HEK293 (cell line): ENCODE measurements at regions of chr16 and their contacts with region 1.

Region 1: DNA sequence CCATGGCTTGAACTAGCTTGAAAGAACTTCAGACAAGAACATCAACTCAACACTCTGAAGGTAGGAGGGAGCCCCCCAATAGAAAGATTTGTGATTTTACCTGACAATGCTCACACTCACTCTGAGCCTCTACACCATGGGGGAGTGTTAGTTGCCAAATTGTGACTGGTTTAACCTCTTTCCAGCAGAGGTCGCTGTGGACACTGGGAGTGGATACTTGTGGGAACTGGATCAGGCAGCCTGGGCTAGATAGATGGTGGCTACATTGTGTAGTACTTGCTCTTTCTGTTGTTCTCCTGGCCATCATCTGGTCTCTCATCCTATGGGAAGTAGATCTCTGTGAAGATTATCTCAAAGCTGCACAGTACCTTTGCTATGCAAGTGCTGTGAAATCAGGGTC is 2.9 kb downstream of the SMPD3 start:
- H3K4me3 ChIP-seq: no peak overlapping the region
- H3K27ac ChIP-seq: no peak overlapping the region
- H3K4me1 ChIP-seq: no peaks in the 10 kb centered on the region
- CTCF ChIP-seq: no peak

Region 2: GRCh38 chr16:68417711-68418301 is 27.7 kb before region 1 on chr16:
- CTCF ChIA-PET with region 1: interaction called, 10 read pairs
- POLR2A ChIA-PET with region 1: interaction called, 3 read pairs
- H3K4me3 ChIP-seq: no peak overlapping the region
- H3K27ac ChIP-seq: peak overlapping the region; percentile 2; the same call in 1 of the 2 replicates
- H3K4me1 ChIP-seq: peaks cover 11% of the 10 kb centered on the region
- CTCF ChIP-seq: no peak

Region 3: DNA sequence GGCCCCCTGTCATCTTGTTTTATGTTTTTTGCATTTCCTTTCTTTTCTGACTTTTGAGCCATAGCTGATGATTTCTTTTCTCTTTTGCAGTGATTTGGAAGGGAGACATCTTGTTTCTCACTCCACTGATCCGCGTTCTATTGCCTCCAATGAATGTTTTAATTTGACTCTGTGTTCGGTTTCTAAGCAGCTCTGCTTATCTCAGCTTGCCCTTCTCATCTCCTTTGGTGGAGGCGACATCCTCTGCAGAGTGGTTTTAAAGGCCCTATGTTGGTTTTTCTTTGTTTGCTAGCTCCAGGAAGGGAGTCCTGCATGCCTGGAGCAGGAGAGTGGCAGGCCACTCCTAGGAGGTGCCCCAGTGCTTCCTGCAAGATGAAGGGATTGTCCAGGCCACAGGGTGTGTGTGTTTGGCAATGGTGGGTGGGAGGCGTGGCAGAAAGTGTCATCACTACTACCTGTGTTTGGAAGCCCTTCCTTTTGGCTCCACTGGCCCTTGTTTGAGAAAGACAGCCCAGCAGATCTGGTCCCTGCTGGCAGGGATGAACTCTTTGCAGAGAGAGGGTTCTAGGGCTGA is 10.7 kb before region 1 on chr16:
- CTCF ChIA-PET with region 1: interaction called, 12 read pairs
- POLR2A ChIA-PET with region 1: no interaction called
- H3K4me3 ChIP-seq: no peak overlapping the region
- H3K27ac ChIP-seq: no peak overlapping the region
- H3K4me1 ChIP-seq: 0 out of 2 replicates have a peak, but pooled peaks cover 2% of the 10 kb centered on the region
- CTCF ChIP-seq: no peak